Activated CD8-positive, alpha-beta T cell treated with anti-CD3 and anti-CD28 coated beads for 36 hours (primary cell): ENCODE measurements at regions of chr1 and their contacts with region 1.

Region 1: GRCh38 chr1:160251687-160252526 is 10.4 kb downstream of the DCAF8 start:
- DNase-seq: peak; percentile 69
- ATAC-seq: peak; percentile 97
- H3K4me3 Mint-ChIP-seq: no peak overlapping the region
- H3K27ac Mint-ChIP-seq: peak overlapping the region; percentile 14
- H3K4me1 Mint-ChIP-seq: peaks cover 16% of the 10 kb centered on the region
- H3K27me3 Mint-ChIP-seq: no peaks in the 10 kb centered on the region
- CTCF ChIP-seq: peak; percentile 69

Region 2: DNA sequence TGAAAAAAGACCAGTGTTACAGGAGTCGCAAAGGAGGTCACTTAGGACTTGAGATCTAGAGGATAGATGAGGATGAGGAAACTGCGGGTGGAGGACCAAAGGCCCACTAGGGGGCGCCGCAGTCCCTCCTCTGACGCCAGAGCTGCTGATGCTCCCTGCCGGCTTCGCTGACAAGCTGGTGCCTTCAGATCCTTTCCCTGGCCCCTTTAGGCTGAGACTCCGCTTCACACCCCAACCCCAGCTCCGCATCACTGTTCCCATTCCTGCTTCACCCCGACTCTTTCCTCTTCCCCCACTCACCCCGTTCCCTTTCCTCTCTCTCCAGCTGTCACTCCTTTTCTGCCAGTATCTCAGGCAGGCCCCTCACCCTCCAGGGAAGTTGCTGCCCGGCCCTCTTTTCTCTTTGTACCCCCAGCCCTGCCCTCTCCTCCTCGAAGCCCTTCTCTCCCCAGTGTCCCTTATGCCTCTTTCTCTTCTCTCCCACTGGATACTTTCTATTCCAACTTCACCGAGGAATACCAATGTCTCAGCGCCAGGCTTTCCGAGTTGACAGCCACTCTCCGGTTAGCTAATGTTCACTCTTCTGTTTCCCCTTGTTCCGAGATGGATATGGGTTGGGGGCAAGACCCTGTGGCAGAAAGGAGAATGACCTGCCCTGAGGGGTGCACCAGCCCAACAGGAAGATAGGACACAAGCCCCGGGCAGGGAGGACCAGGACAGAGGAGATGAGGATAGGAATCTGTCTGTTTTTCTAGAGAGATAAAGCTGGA is 166.0 kb before region 1 on chr1:
- CTCF ChIA-PET with region 1: interaction called, 13 read pairs
- POLR2A ChIA-PET with region 1: no interaction called
- intact Hi-C with region 1: no loop called
- DNase-seq: peak; percentile 92
- ATAC-seq: peak; percentile 76
- H3K4me3 Mint-ChIP-seq: no peak overlapping the region
- H3K27ac Mint-ChIP-seq: no peak overlapping the region
- H3K4me1 Mint-ChIP-seq: peaks cover 5% of the 10 kb centered on the region
- H3K27me3 Mint-ChIP-seq: peaks cover 21% of the 10 kb centered on the region
- CTCF ChIP-seq: peak; percentile 91

Region 3: GRCh38 chr1:160137216-160137862 is 114.6 kb before region 1 on chr1:
- CTCF ChIA-PET with region 1: no interaction called
- POLR2A ChIA-PET with region 1: no interaction called
- intact Hi-C with region 1: no loop called
- DNase-seq: no peak
- ATAC-seq: no peak
- H3K4me3 Mint-ChIP-seq: no peak overlapping the region
- H3K27ac Mint-ChIP-seq: no peak overlapping the region
- H3K4me1 Mint-ChIP-seq: no peaks in the 10 kb centered on the region
- H3K27me3 Mint-ChIP-seq: peaks cover 1% of the 10 kb centered on the region
- CTCF ChIP-seq: no peak

Region 4: DNA sequence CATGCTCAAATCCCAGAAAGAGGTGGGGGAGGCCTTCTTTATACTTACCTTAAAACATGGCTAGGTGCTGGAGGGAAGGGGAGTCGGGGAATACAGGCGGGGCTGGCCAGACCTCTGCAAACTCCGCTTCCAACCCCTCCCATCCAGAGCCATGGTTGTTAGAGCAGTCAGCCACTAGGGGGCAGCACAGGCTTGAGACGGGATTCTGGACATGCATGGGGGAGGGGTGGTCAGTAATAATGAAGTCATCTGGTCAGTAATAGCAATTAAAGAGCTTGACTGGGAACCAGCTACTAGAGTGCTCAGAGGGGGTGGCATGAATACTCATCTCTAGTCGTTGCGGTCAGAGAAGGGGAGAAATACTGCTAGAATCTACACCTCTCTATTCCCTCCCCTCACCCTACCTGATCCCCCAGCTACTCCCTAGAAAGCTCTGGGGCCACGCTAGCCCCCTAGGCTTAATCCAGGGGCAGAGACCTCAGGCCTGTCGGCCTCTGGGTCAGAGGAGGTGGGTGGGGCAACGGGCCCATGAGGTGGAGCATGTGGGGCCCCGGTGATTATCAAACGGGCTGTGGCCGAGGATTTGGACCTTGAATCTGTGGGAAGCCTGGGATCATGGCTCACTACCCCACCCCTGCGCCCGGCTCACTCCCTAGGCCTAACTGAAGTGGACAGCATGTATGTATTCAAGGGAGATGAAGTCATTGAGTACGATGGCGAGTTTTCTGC is 58.7 kb before region 1 on chr1:
- CTCF ChIA-PET with region 1: interaction called, 49 read pairs
- POLR2A ChIA-PET with region 1: interaction called, 5 read pairs
- intact Hi-C with region 1: loop called (anchors 2 kb)
- DNase-seq: peak; percentile 86
- ATAC-seq: peak; percentile 93
- H3K4me3 Mint-ChIP-seq: no peak overlapping the region
- H3K27ac Mint-ChIP-seq: no peak overlapping the region
- H3K4me1 Mint-ChIP-seq: no peaks in the 10 kb centered on the region
- H3K27me3 Mint-ChIP-seq: peaks cover 2% of the 10 kb centered on the region
- CTCF ChIP-seq: peak; percentile 94

Region 5: GRCh38 chr1:160219062-160219929 is 32.6 kb before region 1 on chr1:
- CTCF ChIA-PET with region 1: interaction called, 13 read pairs
- POLR2A ChIA-PET with region 1: no interaction called
- intact Hi-C with region 1: no loop called
- DNase-seq: no peak
- ATAC-seq: no peak
- H3K4me3 Mint-ChIP-seq: no peak overlapping the region
- H3K27ac Mint-ChIP-seq: no peak overlapping the region
- H3K4me1 Mint-ChIP-seq: no peaks in the 10 kb centered on the region
- H3K27me3 Mint-ChIP-seq: no peaks in the 10 kb centered on the region
- CTCF ChIP-seq: no peak

Region 6: DNA sequence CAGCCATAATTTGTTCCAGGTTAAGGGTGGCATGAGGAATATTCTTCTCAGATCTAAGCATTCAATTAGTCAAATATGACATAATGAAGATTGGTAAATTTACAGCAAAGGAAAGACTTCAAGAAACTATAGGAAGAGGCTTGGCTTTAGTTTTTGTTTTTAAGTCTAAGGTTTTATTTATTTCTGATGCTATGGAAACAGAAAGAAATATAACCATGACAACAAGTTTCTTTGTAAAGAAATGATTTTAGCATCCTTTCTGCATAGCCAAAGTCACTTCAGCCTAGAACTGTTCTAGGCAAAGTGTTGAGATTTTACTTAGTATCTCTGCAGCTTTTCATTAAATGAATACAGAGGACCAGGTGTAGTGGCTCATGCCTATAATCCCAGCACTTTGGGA is 19.0 kb before region 1 on chr1:
- CTCF ChIA-PET with region 1: interaction called, 18 read pairs
- POLR2A ChIA-PET with region 1: interaction called, 4 read pairs
- intact Hi-C with region 1: no loop called
- DNase-seq: no peak
- ATAC-seq: no peak
- H3K4me3 Mint-ChIP-seq: no peak overlapping the region
- H3K27ac Mint-ChIP-seq: no peak overlapping the region
- H3K4me1 Mint-ChIP-seq: peaks cover 17% of the 10 kb centered on the region
- H3K27me3 Mint-ChIP-seq: no peaks in the 10 kb centered on the region
- CTCF ChIP-seq: no peak

Region 7: GRCh38 chr1:160284782-160285344 is 33.0 kb after region 1 on chr1 and contains the start of gene PEX19:
- CTCF ChIA-PET with region 1: interaction called, 53 read pairs
- POLR2A ChIA-PET with region 1: interaction called, 5 read pairs
- intact Hi-C with region 1: no loop called
- DNase-seq: peak; percentile 97
- ATAC-seq: peak; percentile 100
- H3K4me3 Mint-ChIP-seq: peak within 1 kb of the TSS; percentile 94
- H3K27ac Mint-ChIP-seq: peak within 1 kb of the TSS; percentile 94
- H3K4me1 Mint-ChIP-seq: peaks cover 20% of the 10 kb centered on the region
- H3K27me3 Mint-ChIP-seq: no peaks in the 10 kb centered on the region
- CTCF ChIP-seq: no peak
- total RNA-seq, gene PEX19: 52.9 to 56.9 TPM